Activated CD4-positive, alpha-beta T cell treated with anti-CD3 and anti-CD28 coated beads, Interleukin-2, amount 10 ng/mL, durations not matched to agents 24 days and 14 days (primary cell): ENCODE measurements at regions of chr21 and their contacts with region 1.

Region 1: GRCh38 chr21:42454786-42455580 is 41.0 kb downstream of the RSPH1 start:
- DNase-seq: no peak
- H3K4me3 Mint-ChIP-seq: no peak overlapping the region
- H3K27ac Mint-ChIP-seq: no peak overlapping the region
- H3K4me1 Mint-ChIP-seq: peaks cover 43% of the 10 kb centered on the region
- H3K27me3 Mint-ChIP-seq: no peaks in the 10 kb centered on the region

Region 2: DNA sequence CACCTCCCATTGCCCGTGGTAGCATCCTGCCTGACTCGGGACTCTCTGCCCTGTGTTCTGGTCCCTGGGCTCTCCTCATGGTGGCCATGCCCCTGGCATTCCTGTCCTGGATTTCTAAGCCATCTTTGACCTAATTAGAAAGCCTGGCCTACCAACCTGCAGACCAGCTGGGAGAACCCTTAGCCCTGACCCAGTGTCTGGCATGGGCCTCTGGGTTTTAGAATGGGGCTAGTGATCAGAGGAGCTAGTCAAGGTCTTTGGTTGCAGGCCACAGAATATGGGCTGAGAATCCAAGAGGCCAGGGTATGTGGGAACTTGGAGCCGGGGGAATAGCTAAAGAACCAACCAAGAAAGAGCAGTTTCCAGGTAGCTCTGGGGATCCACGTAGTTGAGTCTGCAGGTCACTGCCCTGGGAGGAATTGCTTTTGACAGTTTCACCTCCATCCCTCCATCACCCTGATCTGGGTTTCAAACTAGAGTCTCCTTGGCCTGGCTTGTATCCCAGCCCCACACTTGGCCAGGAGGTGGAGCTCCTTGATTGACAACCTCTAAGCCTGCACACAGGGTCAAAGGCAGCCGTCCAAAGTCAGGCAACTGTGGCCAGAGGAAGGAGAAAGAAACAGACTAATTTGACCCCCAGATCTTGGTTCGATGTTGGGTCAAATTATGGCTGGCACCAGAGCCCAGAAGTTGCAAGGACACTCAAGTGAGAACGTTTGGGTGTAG is 290.8 kb before region 1 on chr21:
- intact Hi-C with region 1: loop called (anchors 2 kb)
- DNase-seq: peak; percentile 88
- H3K4me3 Mint-ChIP-seq: no peak overlapping the region
- H3K27ac Mint-ChIP-seq: no peak overlapping the region
- H3K4me1 Mint-ChIP-seq: peaks cover 25% of the 10 kb centered on the region
- H3K27me3 Mint-ChIP-seq: no peaks in the 10 kb centered on the region

Region 3: DNA sequence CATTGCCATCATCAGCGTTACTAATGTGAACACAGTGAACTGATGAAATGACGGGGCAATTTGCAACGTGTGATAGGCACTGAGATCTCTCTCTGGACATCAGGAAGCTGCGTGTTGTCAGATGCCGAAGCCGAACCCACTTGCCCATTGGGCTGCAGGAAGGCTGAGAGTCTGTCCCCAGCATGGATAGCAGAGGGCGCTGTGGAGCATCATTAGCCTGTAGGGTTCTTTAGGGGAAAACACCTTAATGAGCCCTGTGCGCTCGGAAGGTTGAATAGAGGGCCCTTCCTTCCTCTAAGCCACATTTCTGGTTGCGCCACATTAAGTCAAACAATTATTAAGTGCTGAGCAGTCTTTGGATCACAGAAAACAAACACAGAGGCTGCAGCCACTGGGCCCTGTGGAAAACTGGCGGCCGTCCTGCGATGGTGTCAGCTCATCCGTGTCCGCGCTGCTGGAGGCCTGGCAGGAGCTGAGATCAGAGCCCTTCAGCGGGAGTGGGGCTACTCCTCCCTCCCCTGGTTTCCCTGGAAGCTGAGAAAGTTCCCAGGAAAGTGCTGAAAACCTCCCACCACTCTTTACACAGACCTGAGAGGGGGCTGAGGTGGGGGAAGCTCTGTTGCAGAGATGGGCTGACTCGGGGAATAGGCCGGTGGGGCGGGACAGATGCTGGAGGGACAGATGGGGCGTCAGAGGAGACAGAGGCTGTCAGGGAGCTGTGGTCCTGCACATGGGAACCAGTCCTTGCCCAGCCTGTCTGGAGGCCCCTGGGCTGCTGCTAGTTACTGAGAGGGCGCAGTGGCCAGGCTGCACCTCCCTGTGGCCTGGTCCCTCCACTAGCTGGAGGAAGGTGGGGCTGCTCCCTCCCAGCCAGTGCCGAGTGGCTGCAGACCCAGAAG is 116.9 kb before region 1 on chr21:
- intact Hi-C with region 1: loop called (anchors 1 kb)
- DNase-seq: peak; percentile 94
- H3K4me3 Mint-ChIP-seq: no peak overlapping the region
- H3K27ac Mint-ChIP-seq: no peak overlapping the region
- H3K4me1 Mint-ChIP-seq: peaks cover 8% of the 10 kb centered on the region
- H3K27me3 Mint-ChIP-seq: peaks cover 15% of the 10 kb centered on the region

Region 4: DNA sequence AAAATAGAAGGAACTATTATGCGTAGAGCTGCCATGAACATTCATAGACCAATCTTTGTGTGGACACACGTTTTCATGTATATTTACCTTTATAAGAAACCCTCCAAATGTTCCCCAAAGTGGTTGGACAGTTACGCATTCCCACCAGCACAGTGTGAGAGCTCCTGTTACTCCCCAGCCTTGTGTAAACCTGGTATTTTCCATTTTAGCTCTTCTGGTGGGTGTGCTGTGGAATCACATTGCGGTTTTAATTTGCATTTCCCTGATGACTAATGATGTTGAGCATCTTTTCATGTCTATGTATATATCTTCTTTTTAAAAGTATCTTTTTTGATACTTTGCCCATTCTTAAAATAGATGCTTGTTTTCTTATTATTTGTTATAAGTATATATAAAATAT is 54.5 kb before region 1 on chr21:
- intact Hi-C with region 1: loop called (anchors 2 kb)
- DNase-seq: peak; percentile 76
- H3K4me3 Mint-ChIP-seq: peak overlapping the region; percentile 63
- H3K27ac Mint-ChIP-seq: peak overlapping the region; percentile 74
- H3K4me1 Mint-ChIP-seq: peaks cover 48% of the 10 kb centered on the region
- H3K27me3 Mint-ChIP-seq: no peaks in the 10 kb centered on the region

Region 5: DNA sequence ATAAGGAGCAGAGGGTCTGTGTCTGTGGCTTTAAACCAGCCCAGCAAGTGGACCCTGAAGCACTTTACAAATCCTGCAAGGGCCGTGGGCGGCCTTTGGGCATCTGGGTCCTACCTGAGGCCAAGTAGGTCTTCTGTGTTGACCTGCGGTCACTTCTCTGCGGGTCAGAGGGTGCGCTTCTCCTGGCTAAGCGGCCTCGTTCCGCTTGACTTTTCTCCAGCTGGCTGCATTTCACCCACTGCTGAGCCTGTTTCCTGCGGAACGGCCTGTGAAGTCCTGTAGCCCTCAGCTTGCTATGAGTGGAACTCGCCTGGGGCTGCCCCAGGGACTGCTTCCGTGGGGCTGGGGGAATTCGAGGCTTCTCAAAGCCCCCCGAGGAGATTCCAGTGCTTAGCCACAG is 102.0 kb after region 1 on chr21:
- intact Hi-C with region 1: no loop called
- DNase-seq: no peak
- H3K4me3 Mint-ChIP-seq: no peak overlapping the region
- H3K27ac Mint-ChIP-seq: no peak overlapping the region
- H3K4me1 Mint-ChIP-seq: peaks cover 2% of the 10 kb centered on the region
- H3K27me3 Mint-ChIP-seq: no peaks in the 10 kb centered on the region